BJ (cell line): ENCODE measurements at regions of chr13 and their contacts with region 1.

Region 1: GRCh38 chr13:30341815-30342570 is 34.6 kb upstream of the KATNAL1 start:
- DNase-seq: peak; percentile 84
- H3K4me3 ChIP-seq: no peak overlapping the region
- H3K27me3 ChIP-seq: no peaks in the 10 kb centered on the region
- CTCF ChIP-seq: no peak

Region 2: GRCh38 chr13:30158774-30159445 is 183.1 kb before region 1 on chr13:
- CTCF ChIA-PET with region 1: no interaction called
- POLR2A ChIA-PET with region 1: interaction called, 19 read pairs
- DNase-seq: no peak
- H3K4me3 ChIP-seq: no peak overlapping the region
- H3K27me3 ChIP-seq: no peaks in the 10 kb centered on the region
- CTCF ChIP-seq: peak; percentile 58

Region 3: GRCh38 chr13:30355384-30355699 is 13.3 kb after region 1 on chr13:
- CTCF ChIA-PET with region 1: interaction called, 13 read pairs
- POLR2A ChIA-PET with region 1: no interaction called
- DNase-seq: no peak
- H3K4me3 ChIP-seq: no peak overlapping the region
- H3K27me3 ChIP-seq: no peaks in the 10 kb centered on the region
- CTCF ChIP-seq: peak; percentile 19; the same call in 1 of the 2 replicates